AG04449 (cell line): ENCODE measurements at regions of chr1 and their contacts with region 1.

Region 1: DNA sequence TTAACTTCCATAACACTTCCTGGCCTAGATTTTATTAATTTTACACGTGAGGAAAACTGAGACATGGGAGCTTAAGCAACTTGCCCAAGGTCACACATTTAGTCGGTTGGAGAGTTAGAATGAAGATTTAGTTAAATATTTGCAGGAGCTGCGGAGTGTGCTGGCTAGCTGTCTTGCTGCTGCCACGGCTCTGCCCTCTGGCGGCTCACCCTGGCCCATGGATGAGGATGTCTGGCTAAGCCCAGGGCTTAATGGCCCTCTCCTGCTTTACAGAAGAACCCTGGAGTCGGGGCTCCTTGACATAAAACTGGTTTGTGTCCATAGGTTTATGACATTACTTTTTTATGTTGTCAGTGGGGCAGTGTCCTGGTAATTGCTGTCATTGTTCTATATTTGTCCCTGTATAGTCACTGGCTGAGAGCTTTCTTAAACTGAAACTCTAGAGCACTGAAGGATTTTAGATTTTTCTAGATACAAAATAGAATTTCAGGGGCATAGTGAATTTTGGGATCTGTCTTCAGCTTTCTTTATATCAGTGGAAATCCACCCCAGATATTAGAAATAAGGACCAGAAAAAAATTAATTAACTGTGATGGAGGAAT is 88.9 kb upstream of the WLS start:
- DNase-seq: no peak
- H3K4me3 ChIP-seq: no peak overlapping the region
- CTCF ChIP-seq: peak; percentile 68

Region 2: GRCh38 chr1:68331117-68331865 is 10.1 kb after region 1 on chr1:
- CTCF ChIA-PET with region 1: interaction called, 13 read pairs
- POLR2A ChIA-PET with region 1: no interaction called
- DNase-seq: peak; percentile 62
- H3K4me3 ChIP-seq: no peak overlapping the region
- CTCF ChIP-seq: no peak

Region 3: GRCh38 chr1:68358439-68358838 is 37.3 kb after region 1 on chr1:
- CTCF ChIA-PET with region 1: no interaction called
- POLR2A ChIA-PET with region 1: no interaction called
- DNase-seq: no peak
- H3K4me3 ChIP-seq: no peak overlapping the region
- CTCF ChIP-seq: no peak